Endothelial cell of umbilical vein (primary cell): ENCODE measurements at regions of chr2 and their contacts with region 1.

Region 1: GRCh38 chr2:40431600-40431955 is 20.3 kb downstream of the SLC8A1 start:
- DNase-seq: no peak
- H3K4me3 ChIP-seq: no peak overlapping the region
- H3K27ac ChIP-seq: no peak overlapping the region
- H3K4me1 ChIP-seq: peaks cover 31% of the 10 kb centered on the region
- H3K27me3 ChIP-seq: no peaks in the 10 kb centered on the region
- CTCF ChIP-seq: no peak
- POLR2A ChIP-seq: no peak

Region 2: GRCh38 chr2:40401896-40402295 is 29.7 kb before region 1 on chr2:
- CTCF ChIA-PET with region 1: interaction called, 3 read pairs
- POLR2A ChIA-PET with region 1: no interaction called
- dilution Hi-C with region 1: no loop called
- intact Hi-C with region 1: loop called (anchors 1 kb)
- DNase-seq: peak; percentile 67
- H3K4me3 ChIP-seq: no peak overlapping the region
- H3K27ac ChIP-seq: peak overlapping the region; percentile 59
- H3K4me1 ChIP-seq: peaks cover 26% of the 10 kb centered on the region
- H3K27me3 ChIP-seq: no peaks in the 10 kb centered on the region
- CTCF ChIP-seq: no peak
- POLR2A ChIP-seq: peak; percentile 18

Region 3: DNA sequence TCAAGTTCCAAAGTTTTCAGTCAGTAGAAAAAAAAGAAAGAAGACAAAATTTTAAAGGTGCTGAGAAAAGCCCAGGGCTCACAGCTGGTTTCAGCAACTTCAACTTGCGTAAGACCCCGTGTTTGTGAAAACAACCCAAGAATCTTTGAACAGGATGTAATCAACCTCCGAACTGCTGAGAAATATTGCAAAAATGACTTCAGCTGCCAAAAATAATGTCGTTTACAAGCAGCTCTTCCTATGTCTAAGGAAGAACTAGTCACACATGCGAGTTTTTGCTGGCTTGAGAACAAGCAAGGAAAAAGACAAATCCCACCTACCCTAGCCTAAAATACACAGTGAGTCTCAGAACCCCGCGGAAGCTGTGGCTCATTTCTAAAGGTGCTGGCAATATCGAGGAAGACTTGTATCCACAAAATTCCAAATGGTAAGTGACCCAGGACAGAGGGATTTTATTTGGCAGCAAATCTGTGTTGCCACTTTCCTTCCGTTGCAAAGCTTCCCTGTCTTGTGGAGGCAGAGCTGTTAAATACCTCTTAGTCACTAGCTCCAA is 80.2 kb after region 1 on chr2:
- CTCF ChIA-PET with region 1: no interaction called
- POLR2A ChIA-PET with region 1: no interaction called
- dilution Hi-C with region 1: no loop called
- intact Hi-C with region 1: loop called (anchors 1 kb)
- DNase-seq: peak; percentile 87
- H3K4me3 ChIP-seq: peak overlapping the region in 1 of 3 experiments; percentile 34
- H3K27ac ChIP-seq: peak overlapping the region; percentile 68
- H3K4me1 ChIP-seq: peaks cover 16% of the 10 kb centered on the region
- H3K27me3 ChIP-seq: no peaks in the 10 kb centered on the region
- CTCF ChIP-seq: no peak
- POLR2A ChIP-seq: no peak